Activated CD8-positive, alpha-beta T cell treated with anti-CD3 and anti-CD28 coated beads for 36 hours (primary cell): ENCODE measurements at regions of chr10 and their contacts with region 1.

Region 1: DNA sequence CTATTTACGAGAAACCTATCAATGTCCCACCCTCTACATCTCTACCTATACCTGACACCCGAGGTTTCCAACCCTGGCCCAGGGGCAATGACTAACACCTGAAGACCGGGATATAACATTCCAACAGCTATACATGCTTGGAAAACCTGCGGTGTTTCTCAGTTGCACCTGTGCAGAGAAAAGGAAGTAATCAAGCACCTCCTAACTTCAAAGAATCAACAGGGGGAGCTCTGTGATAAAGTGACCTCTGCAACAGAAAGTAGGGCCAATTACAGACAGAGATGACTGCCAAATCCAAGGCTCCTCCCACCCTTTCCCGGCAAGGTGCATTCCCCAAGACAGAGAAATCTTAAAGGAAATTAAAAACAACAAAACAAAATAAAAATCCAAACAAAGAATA is 41.3 kb downstream of the CCDC6 start:
- DNase-seq: no peak
- ATAC-seq: peak; percentile 41
- H3K4me3 Mint-ChIP-seq: peak overlapping the region; percentile 20
- H3K27ac Mint-ChIP-seq: peak overlapping the region; percentile 55
- H3K4me1 Mint-ChIP-seq: peaks cover 64% of the 10 kb centered on the region
- H3K27me3 Mint-ChIP-seq: no peaks in the 10 kb centered on the region
- CTCF ChIP-seq: peak; percentile 49

Region 2: GRCh38 chr10:59844436-59844835 is 20.7 kb before region 1 on chr10:
- CTCF ChIA-PET with region 1: interaction called, 10 read pairs
- POLR2A ChIA-PET with region 1: no interaction called
- intact Hi-C with region 1: no loop called
- DNase-seq: no peak
- ATAC-seq: no peak
- H3K4me3 Mint-ChIP-seq: no peak overlapping the region
- H3K27ac Mint-ChIP-seq: no peak overlapping the region
- H3K4me1 Mint-ChIP-seq: peaks cover 6% of the 10 kb centered on the region
- H3K27me3 Mint-ChIP-seq: no peaks in the 10 kb centered on the region
- CTCF ChIP-seq: no peak

Region 3: DNA sequence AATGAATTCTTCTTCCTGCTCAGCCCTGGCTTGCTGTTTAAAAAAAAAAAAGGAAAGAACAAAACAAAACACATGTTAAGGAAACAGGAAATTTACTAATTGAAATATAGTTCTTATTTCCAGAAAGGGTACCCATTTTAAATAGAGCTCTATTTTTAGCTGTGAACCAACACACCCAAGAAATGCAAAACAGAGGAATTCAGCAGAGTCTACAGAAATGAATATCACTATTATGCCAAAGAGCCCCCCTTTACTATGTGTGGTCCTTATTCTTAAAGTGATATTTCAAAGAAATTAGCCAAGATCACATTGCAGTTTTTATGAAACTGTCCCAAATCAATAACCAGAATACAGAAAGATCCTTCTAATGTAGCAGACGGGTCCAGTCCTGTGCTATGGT is 12.4 kb before region 1 on chr10:
- CTCF ChIA-PET with region 1: interaction called, 20 read pairs
- POLR2A ChIA-PET with region 1: interaction called, 4 read pairs
- intact Hi-C with region 1: no loop called
- DNase-seq: no peak
- ATAC-seq: no peak
- H3K4me3 Mint-ChIP-seq: no peak overlapping the region
- H3K27ac Mint-ChIP-seq: no peak overlapping the region
- H3K4me1 Mint-ChIP-seq: peaks cover 26% of the 10 kb centered on the region
- H3K27me3 Mint-ChIP-seq: no peaks in the 10 kb centered on the region
- CTCF ChIP-seq: no peak